GM13976 (cell line): ENCODE measurements at regions of chr1 and their contacts with region 1.

Region 1: GRCh38 chr1:198771563-198772153 is 132.8 kb downstream of the PTPRC start:
- DNase-seq: peak; percentile 6
- CTCF ChIP-seq: peak; percentile 13

Region 2: GRCh38 chr1:198449727-198450433 is 321.8 kb before region 1 on chr1:
- in situ Hi-C with region 1: no loop called
- DNase-seq: no peak
- CTCF ChIP-seq: no peak

Region 3: GRCh38 chr1:199243423-199244061 is 471.9 kb after region 1 on chr1:
- in situ Hi-C with region 1: loop called (anchors 10 kb)
- DNase-seq: peak; percentile 68
- CTCF ChIP-seq: peak; percentile 87

Region 4: GRCh38 chr1:199463521-199464128 is 692.0 kb after region 1 on chr1:
- in situ Hi-C with region 1: loop called (anchors 25 kb)
- DNase-seq: peak; percentile 5
- CTCF ChIP-seq: no peak